ENCODE measurements at regions of chr16 and their contacts with region 1.

Region 1: GRCh38 chr16:10944249-10945064 is at the start of gene CLEC16A:
- DNase-seq: peak; percentile 92 to 97 (median 94)
- ATAC-seq: peak; percentile 86
- H3K4me3 ChIP-seq: peak within 1 kb of the TSS; percentile 82
- H3K4me3 Mint-ChIP-seq: peak within 1 kb of the TSS; percentile 83 to 96 (median 92)
- H3K27ac ChIP-seq: peak within 1 kb of the TSS; percentile 88
- H3K27ac Mint-ChIP-seq: peak within 1 kb of the TSS; percentile 41 to 92 (median 81)
- H3K4me1 ChIP-seq: peaks cover 34 to 53% of the 10 kb centered on the region in 2 donors
- H3K4me1 Mint-ChIP-seq: peaks cover 43 to 85% (median 70%) of the 10 kb centered on the region in 7 donors
- H3K27me3 ChIP-seq: no peaks in the 10 kb centered on the region
- H3K27me3 Mint-ChIP-seq: no peaks in the 10 kb centered on the region
- total RNA-seq, gene CLEC16A: 28.2 to 38.2 (median 34.0) TPM

Region 2: GRCh38 chr16:9090960-9091866 is 1853.2 kb before region 1 on chr16 and contains the start of gene HAPSTR1:
- CTCF ChIA-PET with region 1: no interaction called
- POLR2A ChIA-PET with region 1: interaction called, 4 read pairs
- intact Hi-C with region 1: loop called in 1 of 2 experiments (anchors 5 kb)
- DNase-seq: peak; percentile 89 to 100 (median 99)
- ATAC-seq: peak; percentile 93
- H3K4me3 ChIP-seq: peak within 1 kb of the TSS; percentile 90
- H3K4me3 Mint-ChIP-seq: peak within 1 kb of the TSS; percentile 90 to 100 (median 98)
- H3K27ac ChIP-seq: peak within 1 kb of the TSS; percentile 98
- H3K27ac Mint-ChIP-seq: peak within 1 kb of the TSS; percentile 92 to 99 (median 97)
- H3K4me1 ChIP-seq: peaks cover 21 to 32% of the 10 kb centered on the region in 2 donors
- H3K4me1 Mint-ChIP-seq: peaks cover 29 to 40% (median 39%) of the 10 kb centered on the region in 7 donors
- H3K27me3 ChIP-seq: no peaks in the 10 kb centered on the region
- H3K27me3 Mint-ChIP-seq: peaks cover 0 to 4% (median 0%) of the 10 kb centered on the region in 5 donors
- total RNA-seq, gene HAPSTR1: 69.6 to 136 (median 87.3) TPM

Region 3: GRCh38 chr16:10876799-10877341 is 67.6 kb before region 1 on chr16 and contains the start of gene CIITA:
- CTCF ChIA-PET with region 1: no interaction called
- POLR2A ChIA-PET with region 1: no interaction called
- intact Hi-C with region 1: loop called in 1 of 2 experiments (anchors 2 kb)
- DNase-seq: peak in 2 of 9 donors; percentile 20 to 34
- ATAC-seq: peak; percentile 88
- H3K4me3 ChIP-seq: peak within 1 kb of the TSS; percentile 47
- H3K4me3 Mint-ChIP-seq: peak within 1 kb of the TSS; percentile 63 to 95 (median 86)
- H3K27ac ChIP-seq: no peak within 1 kb of the TSS
- H3K27ac Mint-ChIP-seq: peak within 1 kb of the TSS in 1 of 9 donors; percentile 68
- H3K4me1 ChIP-seq: peaks cover 0 to 51% of the 10 kb centered on the region in 2 donors
- H3K4me1 Mint-ChIP-seq: peaks cover 27 to 77% (median 40%) of the 10 kb centered on the region in 7 donors
- H3K27me3 ChIP-seq: peaks cover 0 to 4% of the 10 kb centered on the region in 2 donors
- H3K27me3 Mint-ChIP-seq: peaks cover 52 to 78% (median 60%) of the 10 kb centered on the region in 5 donors
- total RNA-seq, gene CIITA: 1.0 to 72.1 (median 6.7) TPM

Region 4: DNA sequence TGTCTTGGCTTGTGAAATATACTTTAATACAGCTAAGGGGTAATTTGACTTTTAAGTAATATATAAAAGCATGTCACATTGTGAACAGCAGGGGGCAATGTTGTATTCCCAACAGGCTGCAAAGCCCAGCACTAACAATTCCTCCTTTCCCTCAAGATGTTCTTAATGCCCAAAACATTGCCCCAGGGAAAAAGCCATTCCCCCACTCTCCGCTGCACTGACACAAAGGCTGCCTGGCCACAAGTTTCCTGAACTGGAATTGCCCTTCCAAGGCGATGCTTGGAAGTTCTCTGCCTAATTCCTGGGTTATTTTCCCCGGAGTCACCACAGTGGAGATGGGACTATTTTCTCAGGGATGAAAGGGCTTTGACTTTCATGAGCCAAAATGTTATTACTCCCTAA is 27.1 kb after region 1 on chr16:
- CTCF ChIA-PET with region 1: no interaction called
- POLR2A ChIA-PET with region 1: no interaction called
- intact Hi-C with region 1: no loop called
- DNase-seq: peak in 6 of 9 donors; percentile 15 to 56 (median 46)
- ATAC-seq: peak; percentile 62
- H3K4me3 ChIP-seq: no peak overlapping the region
- H3K4me3 Mint-ChIP-seq: peak overlapping the region in 1 of 10 donors; percentile 60
- H3K27ac ChIP-seq: no peak overlapping the region
- H3K27ac Mint-ChIP-seq: peak overlapping the region in 3 of 9 donors; percentile 18 to 49 (median 42)
- H3K4me1 ChIP-seq: no peaks in the 10 kb centered on the region
- H3K4me1 Mint-ChIP-seq: peaks cover 6 to 70% (median 15%) of the 10 kb centered on the region in 7 donors
- H3K27me3 ChIP-seq: no peaks in the 10 kb centered on the region
- H3K27me3 Mint-ChIP-seq: no peaks in the 10 kb centered on the region

Region 5: DNA sequence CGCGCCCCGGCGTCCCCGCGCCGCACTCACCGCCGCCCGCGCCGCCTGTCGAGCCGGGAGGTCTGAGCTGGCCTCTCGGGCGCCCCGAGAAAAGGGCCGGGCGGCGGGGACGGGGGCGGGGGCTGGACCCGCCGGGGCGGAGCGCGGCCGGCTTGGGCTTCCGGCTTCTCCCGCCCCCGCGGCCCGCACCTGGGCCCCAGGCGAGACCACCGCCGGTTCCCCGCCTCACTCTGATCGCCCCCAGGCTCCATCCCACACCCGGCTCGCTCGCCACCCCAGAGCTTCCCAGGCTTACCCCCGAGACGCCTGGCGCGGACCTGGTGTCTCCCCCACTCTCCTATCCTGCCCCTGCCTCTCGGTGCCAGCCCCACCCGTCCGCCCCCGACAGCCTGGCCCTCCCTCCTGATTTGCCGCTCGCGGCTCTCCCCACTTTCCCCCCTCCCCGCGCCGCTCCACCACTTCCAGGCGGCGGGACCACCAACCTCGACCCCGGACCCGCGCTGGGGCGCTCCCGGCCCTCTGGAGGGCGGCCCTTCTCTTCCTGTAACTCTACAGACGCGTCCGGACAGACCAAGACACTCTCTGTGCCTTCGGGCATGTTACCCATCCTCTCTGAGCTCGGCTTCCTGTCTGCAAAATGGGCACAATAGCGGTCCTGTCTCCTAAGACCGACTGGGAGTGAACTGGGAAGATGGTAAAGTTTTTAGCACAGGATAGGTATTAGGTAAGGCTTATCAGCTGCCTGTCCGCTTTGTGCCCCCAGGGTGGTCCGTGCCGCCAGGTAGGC is 642.6 kb after region 1 on chr16 and contains the start of gene LITAF:
- CTCF ChIA-PET with region 1: no interaction called
- POLR2A ChIA-PET with region 1: no interaction called
- intact Hi-C with region 1: loop called in 1 of 2 experiments (anchors 10 kb)
- DNase-seq: peak in 8 of 9 donors; percentile 52 to 75 (median 57)
- ATAC-seq: peak; percentile 71
- H3K4me3 ChIP-seq: peak within 1 kb of the TSS; percentile 88
- H3K4me3 Mint-ChIP-seq: peak within 1 kb of the TSS; percentile 91 to 100 (median 96)
- H3K27ac ChIP-seq: peak within 1 kb of the TSS; percentile 94
- H3K27ac Mint-ChIP-seq: peak within 1 kb of the TSS; percentile 90 to 99 (median 97)
- H3K4me1 ChIP-seq: peaks cover 32 to 38% of the 10 kb centered on the region in 2 donors
- H3K4me1 Mint-ChIP-seq: peaks cover 29 to 45% (median 37%) of the 10 kb centered on the region in 7 donors
- H3K27me3 ChIP-seq: no peaks in the 10 kb centered on the region
- H3K27me3 Mint-ChIP-seq: peaks cover 0 to 7% (median 0%) of the 10 kb centered on the region in 5 donors
- total RNA-seq, gene LITAF: 126 to 278 (median 208) TPM

Region 6: GRCh38 chr16:11851294-11852091 is 907.0 kb after region 1 on chr16 and contains the start of gene RSL1D1:
- CTCF ChIA-PET with region 1: no interaction called
- POLR2A ChIA-PET with region 1: no interaction called
- intact Hi-C with region 1: loop called in 1 of 2 experiments (anchors 1 kb)
- DNase-seq: peak; percentile 90 to 99 (median 96)
- ATAC-seq: peak; percentile 92
- H3K4me3 ChIP-seq: peak within 1 kb of the TSS; percentile 95
- H3K4me3 Mint-ChIP-seq: peak within 1 kb of the TSS; percentile 94 to 99 (median 99)
- H3K27ac ChIP-seq: peak within 1 kb of the TSS; percentile 89
- H3K27ac Mint-ChIP-seq: peak within 1 kb of the TSS; percentile 91 to 98 (median 97)
- H3K4me1 ChIP-seq: peaks cover 29% of the 10 kb centered on the region in 2 donors
- H3K4me1 Mint-ChIP-seq: peaks cover 32 to 72% (median 63%) of the 10 kb centered on the region in 7 donors
- H3K27me3 ChIP-seq: no peaks in the 10 kb centered on the region
- H3K27me3 Mint-ChIP-seq: no peaks in the 10 kb centered on the region
- total RNA-seq, gene RSL1D1: 141 to 255 (median 219) TPM

Region 7: DNA sequence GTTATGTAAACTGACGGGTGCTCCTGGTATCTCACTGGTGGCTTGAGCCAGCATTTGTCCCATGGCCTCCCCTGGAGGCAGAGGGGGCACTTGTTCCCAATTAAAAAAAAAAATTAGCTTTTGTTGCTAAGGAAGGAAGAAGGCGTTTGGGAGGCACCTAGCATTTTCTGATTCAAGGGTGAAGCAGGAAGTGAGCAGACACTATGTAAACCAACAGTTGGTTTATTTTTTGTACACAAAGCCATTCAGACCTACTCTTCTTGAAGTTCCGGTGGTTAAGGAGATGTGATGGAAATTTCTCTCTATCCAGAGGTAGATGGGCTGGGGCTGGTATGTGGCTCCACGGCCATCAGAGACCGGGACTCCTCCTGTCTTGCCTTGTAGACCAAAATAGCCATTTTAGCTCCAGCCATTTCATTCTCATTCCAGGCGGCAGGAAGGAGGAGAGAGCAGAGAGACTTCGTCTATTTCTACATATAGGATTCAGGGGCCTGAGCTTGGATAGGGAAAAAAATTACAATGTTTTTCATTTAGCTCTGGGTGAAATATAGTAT is 1135.0 kb after region 1 on chr16:
- CTCF ChIA-PET with region 1: no interaction called
- POLR2A ChIA-PET with region 1: no interaction called
- intact Hi-C with region 1: loop called (anchors 5 kb)
- DNase-seq: peak in 5 of 9 donors; percentile 42 to 61 (median 52)
- ATAC-seq: peak; percentile 34
- H3K4me3 ChIP-seq: peak overlapping the region; percentile 24
- H3K4me3 Mint-ChIP-seq: peak overlapping the region; percentile 54 to 94 (median 78)
- H3K27ac ChIP-seq: peak overlapping the region; percentile 84
- H3K27ac Mint-ChIP-seq: peak overlapping the region; percentile 88 to 97 (median 96)
- H3K4me1 ChIP-seq: peaks cover 40 to 66% of the 10 kb centered on the region in 2 donors
- H3K4me1 Mint-ChIP-seq: peaks cover 34 to 93% (median 77%) of the 10 kb centered on the region in 7 donors
- H3K27me3 ChIP-seq: no peaks in the 10 kb centered on the region
- H3K27me3 Mint-ChIP-seq: no peaks in the 10 kb centered on the region